ENCODE measurements at regions of chr9 and their contacts with region 1.

Region 1: GRCh38 chr9:81193362-81194304 is 495.7 kb downstream of the TLE1 start:
- DNase-seq: peak; percentile 79
- ATAC-seq: peak; percentile 88
- H3K4me3 ChIP-seq: no peak overlapping the region
- H3K27ac ChIP-seq: peak overlapping the region; percentile 84
- H3K4me1 ChIP-seq: peaks cover 25% of the 10 kb centered on the region
- H3K27me3 ChIP-seq: no peaks in the 10 kb centered on the region
- CTCF ChIP-seq: no peak

Region 2: DNA sequence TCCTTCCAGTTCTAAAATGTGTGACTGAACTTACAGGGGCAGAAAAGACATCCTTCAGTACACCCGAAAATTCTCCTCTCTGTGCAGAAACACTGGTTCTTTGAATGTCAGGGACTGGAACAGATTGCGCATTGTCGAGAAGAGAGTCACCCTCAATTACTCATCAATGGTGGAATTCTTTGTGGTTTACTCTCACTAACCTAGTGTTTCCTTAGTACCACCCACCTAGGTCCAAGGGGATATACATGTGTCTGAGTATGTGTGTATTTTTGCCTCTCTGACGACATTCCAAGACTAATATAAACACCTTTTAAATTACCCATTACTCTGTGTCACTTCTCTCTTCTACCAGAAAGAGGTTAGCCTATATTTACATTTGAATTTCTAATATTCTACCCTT is 165.1 kb before region 1 on chr9:
- CTCF ChIA-PET with region 1: no interaction called
- POLR2A ChIA-PET with region 1: interaction called, 3 read pairs
- intact Hi-C with region 1: loop called (anchors 1 kb)
- DNase-seq: peak; percentile 91
- ATAC-seq: peak; percentile 96
- H3K4me3 ChIP-seq: no peak overlapping the region; the same call in 1 of the 2 replicates
- H3K27ac ChIP-seq: peak overlapping the region; percentile 73
- H3K4me1 ChIP-seq: peaks cover 35% of the 10 kb centered on the region
- H3K27me3 ChIP-seq: no peaks in the 10 kb centered on the region
- CTCF ChIP-seq: no peak

Region 3: DNA sequence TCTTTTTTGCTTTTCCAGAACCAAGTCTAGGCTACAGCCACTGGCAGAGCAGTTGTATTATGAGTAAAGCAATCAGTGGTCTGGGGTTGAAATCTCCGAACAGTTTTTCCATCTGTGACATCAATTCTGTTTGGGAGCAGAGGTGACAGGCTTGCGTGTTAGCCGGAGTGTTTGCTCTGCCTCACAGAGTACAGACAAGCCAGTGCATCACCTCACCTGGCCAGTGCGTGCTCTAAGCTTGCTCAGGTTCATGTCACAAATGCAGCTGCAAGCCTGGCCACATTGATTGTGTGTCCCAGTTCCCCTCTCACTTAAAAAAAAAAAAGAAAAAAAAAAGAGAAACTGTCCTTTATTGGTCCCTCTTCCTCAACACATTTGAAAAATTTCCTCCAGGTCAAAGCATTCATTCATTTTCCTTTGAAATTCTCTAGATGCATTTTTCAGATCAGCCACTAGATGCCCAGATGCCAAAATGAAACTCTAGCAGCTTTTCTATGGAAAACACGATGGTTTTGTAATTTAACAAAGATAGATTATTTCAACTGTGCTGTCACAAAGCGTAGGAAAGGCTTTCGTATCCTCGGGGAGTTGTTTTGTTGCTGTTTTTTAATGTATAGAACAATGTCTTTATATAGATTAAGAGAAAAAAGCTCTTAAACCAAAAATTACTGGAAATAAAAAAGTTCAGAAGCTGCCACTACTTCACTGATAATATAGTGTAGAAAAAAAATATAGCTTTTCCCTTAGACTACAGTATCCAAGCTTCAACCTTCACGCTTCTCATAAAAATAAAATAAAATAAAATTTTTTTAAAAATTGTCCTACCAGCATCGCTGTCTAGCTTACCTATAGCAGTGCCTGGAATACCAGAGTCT is 89.8 kb before region 1 on chr9:
- CTCF ChIA-PET with region 1: no interaction called
- POLR2A ChIA-PET with region 1: no interaction called
- intact Hi-C with region 1: no loop called
- DNase-seq: peak; percentile 21
- ATAC-seq: no peak
- H3K4me3 ChIP-seq: no peak overlapping the region
- H3K27ac ChIP-seq: no peak overlapping the region
- H3K4me1 ChIP-seq: peaks cover 19% of the 10 kb centered on the region
- H3K27me3 ChIP-seq: no peaks in the 10 kb centered on the region
- CTCF ChIP-seq: peak; percentile 51

Region 4: GRCh38 chr9:81125446-81126092 is 68.1 kb before region 1 on chr9:
- CTCF ChIA-PET with region 1: no interaction called
- POLR2A ChIA-PET with region 1: no interaction called
- intact Hi-C with region 1: loop called (anchors 1 kb)
- DNase-seq: peak; percentile 87
- ATAC-seq: peak; percentile 94
- H3K4me3 ChIP-seq: peak overlapping the region; percentile 9; the same call in 1 of the 2 replicates
- H3K27ac ChIP-seq: peak overlapping the region; percentile 90
- H3K4me1 ChIP-seq: peaks cover 24% of the 10 kb centered on the region
- H3K27me3 ChIP-seq: no peaks in the 10 kb centered on the region
- CTCF ChIP-seq: no peak

Region 5: GRCh38 chr9:81237565-81238231 is 44.1 kb after region 1 on chr9:
- CTCF ChIA-PET with region 1: no interaction called
- POLR2A ChIA-PET with region 1: no interaction called
- intact Hi-C with region 1: loop called (anchors 5 kb)
- DNase-seq: peak; percentile 48
- ATAC-seq: peak; percentile 68
- H3K4me3 ChIP-seq: no peak overlapping the region
- H3K27ac ChIP-seq: no peak overlapping the region; the same call in 1 of the 2 replicates
- H3K4me1 ChIP-seq: peaks cover 16% of the 10 kb centered on the region
- H3K27me3 ChIP-seq: no peaks in the 10 kb centered on the region
- CTCF ChIP-seq: no peak

Region 6: DNA sequence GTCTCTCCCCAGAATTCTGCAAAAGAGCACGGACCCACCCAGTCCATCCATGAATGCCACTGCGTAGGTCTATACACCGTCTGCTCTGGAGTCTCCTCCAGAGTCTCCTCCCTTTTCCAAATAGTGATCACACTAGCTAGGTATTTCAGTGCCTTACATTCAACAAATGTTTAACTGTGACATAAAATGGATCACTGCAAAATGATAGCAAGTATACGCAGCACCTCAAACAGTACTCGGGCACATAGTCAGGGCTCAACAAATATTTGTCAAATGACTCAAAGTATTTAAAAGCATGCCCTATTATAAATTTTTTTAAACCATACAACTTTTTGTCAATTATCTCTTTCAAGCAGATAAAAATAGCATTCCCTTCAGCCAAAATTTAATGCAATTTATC is 435.3 kb after region 1 on chr9:
- CTCF ChIA-PET with region 1: no interaction called
- POLR2A ChIA-PET with region 1: no interaction called
- intact Hi-C with region 1: loop called (anchors 1 kb)
- DNase-seq: peak; percentile 93
- ATAC-seq: peak; percentile 86
- H3K4me3 ChIP-seq: peak overlapping the region; percentile 9; the same call in 1 of the 2 replicates
- H3K27ac ChIP-seq: peak overlapping the region; percentile 91
- H3K4me1 ChIP-seq: peaks cover 56% of the 10 kb centered on the region
- H3K27me3 ChIP-seq: no peaks in the 10 kb centered on the region
- CTCF ChIP-seq: no peak